A673 (cell line): ENCODE measurements at regions of chr7 and their contacts with region 1.

Region 1: GRCh38 chr7:68676813-68677535 is 921.3 kb upstream of the AUTS2 start:
- DNase-seq: peak; percentile 84
- H3K4me3 ChIP-seq: no peak overlapping the region
- H3K27ac ChIP-seq: peak overlapping the region; percentile 91
- H3K4me1 ChIP-seq: peaks cover 53% of the 10 kb centered on the region
- H3K27me3 ChIP-seq: no peaks in the 10 kb centered on the region
- CTCF ChIP-seq: no peak

Region 2: GRCh38 chr7:67918158-67918557 is 758.8 kb before region 1 on chr7:
- CTCF ChIA-PET with region 1: no interaction called
- POLR2A ChIA-PET with region 1: no interaction called
- intact Hi-C with region 1: loop called (anchors 5 kb)
- DNase-seq: peak; percentile 91
- H3K4me3 ChIP-seq: no peak overlapping the region
- H3K27ac ChIP-seq: peak overlapping the region; percentile 78
- H3K4me1 ChIP-seq: peaks cover 17% of the 10 kb centered on the region
- H3K27me3 ChIP-seq: no peaks in the 10 kb centered on the region
- CTCF ChIP-seq: no peak

Region 3: GRCh38 chr7:68176974-68177373 is 500.0 kb before region 1 on chr7:
- CTCF ChIA-PET with region 1: no interaction called
- POLR2A ChIA-PET with region 1: no interaction called
- intact Hi-C with region 1: loop called (anchors 10 kb)
- DNase-seq: peak; percentile 87
- H3K4me3 ChIP-seq: no peak overlapping the region
- H3K27ac ChIP-seq: no peak overlapping the region
- H3K4me1 ChIP-seq: no peaks in the 10 kb centered on the region
- H3K27me3 ChIP-seq: no peaks in the 10 kb centered on the region
- CTCF ChIP-seq: peak; percentile 85

Region 4: DNA sequence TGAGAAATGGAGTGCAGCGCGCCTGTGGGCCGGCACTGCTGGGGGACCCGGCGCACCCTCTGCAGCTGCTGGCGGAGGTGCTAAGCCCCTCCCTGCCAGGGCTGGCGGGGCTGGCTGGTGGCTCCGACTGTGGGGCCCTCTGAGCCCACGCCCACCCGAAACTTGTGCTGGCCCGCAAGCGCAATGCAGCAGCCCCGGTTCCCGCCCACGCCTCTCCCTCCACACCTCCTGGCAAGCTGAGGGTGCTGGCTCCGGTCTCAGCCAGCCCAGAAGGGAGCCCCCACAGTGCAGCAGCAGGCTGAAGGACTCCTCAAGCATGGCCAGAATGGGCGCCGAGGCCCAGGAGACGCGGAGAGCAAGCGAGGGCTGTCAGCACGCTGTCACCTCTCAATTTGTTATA is 141.7 kb before region 1 on chr7:
- CTCF ChIA-PET with region 1: no interaction called
- POLR2A ChIA-PET with region 1: interaction called, 6 read pairs
- intact Hi-C with region 1: loop called (anchors 5 kb)
- DNase-seq: peak; percentile 26
- H3K4me3 ChIP-seq: no peak overlapping the region
- H3K27ac ChIP-seq: no peak overlapping the region
- H3K4me1 ChIP-seq: peaks cover 24% of the 10 kb centered on the region
- H3K27me3 ChIP-seq: no peaks in the 10 kb centered on the region
- CTCF ChIP-seq: no peak

Region 5: DNA sequence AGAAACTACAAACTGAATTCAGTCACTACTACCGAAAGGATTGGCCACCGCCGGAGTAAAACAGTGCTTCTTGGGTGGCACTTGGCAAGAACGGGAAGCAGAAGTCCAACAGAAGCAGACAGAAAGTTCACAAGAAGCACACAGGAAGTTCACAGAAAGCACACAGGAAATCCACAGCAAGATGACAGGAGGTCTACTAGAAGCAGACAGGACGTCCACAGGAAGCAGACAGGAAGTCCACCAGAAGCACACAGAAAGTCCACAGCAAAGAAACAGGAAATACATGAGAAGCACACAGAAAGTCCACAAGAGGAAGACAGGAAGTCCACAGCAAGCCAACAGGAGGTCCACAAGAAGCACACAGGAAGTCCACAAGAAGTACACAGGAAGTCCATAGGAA is 522.1 kb after region 1 on chr7:
- CTCF ChIA-PET with region 1: no interaction called
- POLR2A ChIA-PET with region 1: no interaction called
- intact Hi-C with region 1: loop called (anchors 1 kb)
- DNase-seq: no peak
- H3K4me3 ChIP-seq: no peak overlapping the region
- H3K27ac ChIP-seq: peak overlapping the region; percentile 90
- H3K4me1 ChIP-seq: peaks cover 7% of the 10 kb centered on the region
- H3K27me3 ChIP-seq: no peaks in the 10 kb centered on the region
- CTCF ChIP-seq: no peak

Region 6: DNA sequence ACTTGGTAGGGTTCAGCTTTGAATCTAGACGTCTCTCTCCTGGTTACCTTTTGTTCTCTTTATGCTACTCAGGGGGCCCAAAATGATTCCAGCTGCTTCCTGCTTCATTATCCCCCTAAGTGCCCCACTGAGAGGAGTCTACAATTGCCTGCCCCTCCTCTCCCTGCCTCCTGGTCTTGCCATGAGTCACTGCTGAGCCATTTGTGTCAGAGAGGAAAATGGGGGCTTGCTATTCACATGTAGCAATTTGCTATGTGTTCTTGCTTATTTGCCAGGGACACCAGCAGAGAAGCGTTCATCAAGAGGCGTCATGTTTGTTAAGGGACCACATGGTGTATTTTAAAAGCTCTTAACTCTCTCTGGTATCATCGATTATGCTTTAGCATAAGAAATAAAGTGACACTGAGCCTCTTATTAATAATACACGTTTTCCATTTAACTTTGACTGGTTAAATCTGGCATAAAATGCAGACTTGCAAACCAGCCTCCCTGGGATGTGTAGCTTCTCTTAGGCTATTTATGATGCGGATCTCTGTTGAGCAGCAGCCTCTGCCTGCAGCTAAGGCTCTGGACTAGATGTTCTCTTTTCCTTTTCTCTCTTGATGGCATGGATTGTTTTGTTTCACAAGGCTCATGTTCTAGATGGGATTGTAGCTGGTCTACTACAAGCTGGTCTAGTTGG is 1160.6 kb after region 1 on chr7:
- CTCF ChIA-PET with region 1: no interaction called
- POLR2A ChIA-PET with region 1: no interaction called
- intact Hi-C with region 1: loop called (anchors 10 kb)
- DNase-seq: peak; percentile 98
- H3K4me3 ChIP-seq: no peak overlapping the region
- H3K27ac ChIP-seq: peak overlapping the region; percentile 24
- H3K4me1 ChIP-seq: peaks cover 56% of the 10 kb centered on the region
- H3K27me3 ChIP-seq: no peaks in the 10 kb centered on the region
- CTCF ChIP-seq: no peak

Region 7: GRCh38 chr7:69893906-69894305 is 1216.9 kb after region 1 on chr7:
- CTCF ChIA-PET with region 1: no interaction called
- POLR2A ChIA-PET with region 1: no interaction called
- intact Hi-C with region 1: loop called (anchors 5 kb)
- DNase-seq: peak; percentile 65
- H3K4me3 ChIP-seq: no peak overlapping the region
- H3K27ac ChIP-seq: no peak overlapping the region
- H3K4me1 ChIP-seq: peaks cover 20% of the 10 kb centered on the region
- H3K27me3 ChIP-seq: no peaks in the 10 kb centered on the region
- CTCF ChIP-seq: peak; percentile 62